ENCODE measurements at regions of chr11 and their contacts with region 1.

Region 1: GRCh38 chr11:91163619-91164451 is 941.0 kb upstream of the CHORDC1 start:
- DNase-seq: no peak
- H3K4me3 ChIP-seq: no peak overlapping the region
- H3K27ac ChIP-seq: peak overlapping the region; percentile 75 to 85 (median 77)
- H3K4me1 ChIP-seq: peaks cover 10 to 27% (median 23%) of the 10 kb centered on the region in 4 donors
- H3K27me3 ChIP-seq: no peaks in the 10 kb centered on the region
- CTCF ChIP-seq: no peak
- EP300 ChIP-seq: peak; percentile 65
- POLR2A ChIP-seq: no peak

Region 2: GRCh38 chr11:91248199-91248807 is 84.5 kb after region 1 on chr11:
- intact Hi-C with region 1: loop called (anchors 5 kb)
- DNase-seq: no peak
- H3K4me3 ChIP-seq: no peak overlapping the region
- H3K27ac ChIP-seq: no peak overlapping the region
- H3K4me1 ChIP-seq: peaks cover 0 to 10% (median 9%) of the 10 kb centered on the region in 4 donors
- H3K27me3 ChIP-seq: no peaks in the 10 kb centered on the region
- CTCF ChIP-seq: peak; percentile 43 to 67 (median 58)
- EP300 ChIP-seq: no peak
- POLR2A ChIP-seq: no peak